Dorsolateral prefrontal cortex (tissue), 120 donors: ENCODE measurements at regions of chr20 and their contacts with region 1.

Region 1: DNA sequence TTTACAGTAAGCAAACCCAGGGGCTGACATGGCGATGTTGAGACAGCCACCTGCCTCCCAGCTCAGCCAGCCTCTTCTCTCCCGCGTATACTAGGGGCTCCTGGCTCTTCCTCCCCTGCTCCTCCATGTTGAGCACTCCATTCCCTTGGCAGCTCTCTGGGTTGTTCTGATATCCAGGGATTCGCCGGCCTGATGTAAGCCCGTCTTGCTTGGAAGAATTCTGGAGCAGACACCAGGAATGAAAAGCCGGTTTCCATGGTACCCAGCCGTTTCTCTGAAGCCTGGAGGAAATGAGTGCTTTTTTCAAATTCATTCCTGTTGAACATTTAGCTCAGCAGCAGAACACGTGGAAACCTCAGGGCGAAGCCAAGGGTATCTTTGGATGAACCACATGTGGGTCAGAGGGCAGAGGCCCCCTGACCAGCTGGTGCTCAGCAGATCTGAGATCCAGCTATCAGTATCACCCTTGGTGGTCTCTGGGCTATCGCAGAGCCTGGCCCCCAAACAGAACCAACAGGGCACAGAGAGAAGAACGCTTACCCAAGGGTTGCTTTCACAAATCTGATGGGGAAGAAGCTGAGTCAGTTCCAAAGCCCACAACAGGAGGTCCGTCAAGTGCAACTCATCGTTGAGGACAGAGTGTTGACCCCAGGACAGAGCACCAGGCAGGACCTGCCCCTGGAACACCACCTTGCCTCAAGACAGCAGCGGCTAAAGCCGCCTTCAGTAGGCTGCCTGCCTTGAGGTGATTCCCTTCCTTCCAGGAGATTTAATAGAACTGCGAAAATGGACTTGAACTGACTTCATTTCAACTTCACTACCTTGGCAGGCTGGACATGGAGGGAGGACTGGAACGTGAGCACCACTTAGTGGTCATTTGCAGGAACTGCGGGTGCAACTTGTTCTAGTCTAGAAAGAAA is 96.1 kb upstream of the RIN2 start:
- DNase-seq: peak; percentile 42 to 82 (median 74)
- H3K4me3 ChIP-seq: peak overlapping the region in 29 of 59 donors; percentile 4 to 49 (median 17)
- H3K27ac ChIP-seq: peak overlapping the region in 18 of 59 donors; percentile 1 to 53 (median 20)
- H3K27me3 ChIP-seq: peaks cover 0 to 7% (median 0%) of the 10 kb centered on the region in 45 donors
- CTCF ChIP-seq: peak; percentile 90 to 99 (median 97)

Region 2: DNA sequence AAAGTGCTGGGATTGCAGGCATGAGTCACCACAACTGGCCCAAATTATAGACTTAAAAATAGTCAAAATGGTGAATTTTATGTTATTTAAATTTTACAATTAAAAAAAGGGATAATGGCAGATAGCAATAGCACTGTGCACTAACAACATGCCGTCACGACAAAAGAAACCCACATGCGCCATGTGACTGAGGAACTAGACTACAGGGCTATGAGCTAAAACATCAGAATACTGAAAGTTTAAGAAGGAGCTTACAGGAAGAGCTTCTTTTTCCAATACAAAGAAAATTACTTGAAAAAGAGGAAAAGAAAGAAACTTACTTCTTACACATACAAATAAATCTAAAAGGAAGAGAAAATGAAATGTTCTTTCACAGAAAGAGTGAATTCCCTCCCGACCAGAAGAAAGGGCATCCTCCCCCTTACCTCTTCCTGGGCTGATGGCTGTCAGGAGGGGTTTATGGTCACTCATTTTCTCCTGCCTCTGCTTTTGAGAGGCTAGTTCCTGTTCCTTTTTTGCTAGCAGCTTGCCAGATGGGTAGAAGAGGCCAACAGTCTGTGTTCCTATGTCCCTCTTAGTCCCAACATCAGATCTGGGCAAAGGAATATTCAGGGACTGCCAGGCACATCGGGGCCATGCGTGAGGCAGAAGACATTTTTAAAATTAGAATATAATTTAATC is 1249.6 kb before region 1 on chr20:
- intact Hi-C with region 1: loop called in 1 of 2 experiments (anchors 10 kb)
- DNase-seq: no peak
- H3K4me3 ChIP-seq: no peak overlapping the region
- H3K27ac ChIP-seq: no peak overlapping the region
- H3K27me3 ChIP-seq: no peaks in the 10 kb centered on the region
- CTCF ChIP-seq: no peak

Region 3: DNA sequence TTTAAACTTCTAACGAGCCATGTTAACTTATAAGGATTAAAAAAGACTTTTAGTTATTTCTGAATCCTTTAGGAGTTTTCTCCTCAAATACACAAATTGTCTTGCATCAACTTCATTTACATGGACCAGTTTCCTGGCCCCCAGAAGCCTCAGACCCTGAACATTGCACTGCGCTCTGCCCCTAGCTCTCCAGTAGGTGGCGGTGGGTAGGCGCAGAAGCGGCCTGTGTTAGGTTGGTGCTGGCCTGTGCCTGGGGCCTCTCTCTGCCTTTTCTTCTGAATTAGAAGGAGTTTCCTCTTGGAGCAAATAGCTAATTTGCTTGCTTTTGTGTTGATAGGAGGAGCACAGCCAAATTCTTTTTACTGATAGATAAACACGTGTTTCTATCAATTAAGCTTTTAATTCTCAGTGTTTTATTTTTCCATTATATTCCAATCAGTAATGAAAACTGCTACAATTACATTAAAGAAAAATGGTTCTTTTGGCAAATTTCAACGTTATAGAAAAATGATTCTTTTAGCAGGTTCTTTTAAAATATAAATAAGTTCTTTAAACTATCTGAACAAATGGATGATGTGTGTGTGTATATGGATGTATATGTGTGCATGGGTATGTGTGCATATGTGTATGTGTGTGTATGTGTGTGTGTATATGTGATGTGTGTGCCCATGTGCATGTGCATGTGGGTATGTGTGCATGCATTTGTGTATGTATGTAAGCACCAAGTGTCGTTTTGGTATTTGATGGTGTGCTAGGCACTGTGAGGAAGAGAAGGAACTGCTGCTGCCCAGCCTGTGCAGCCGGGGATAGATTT is 1029.6 kb before region 1 on chr20:
- intact Hi-C with region 1: loop called (anchors 5 kb)
- DNase-seq: peak; percentile 52 to 85 (median 78)
- H3K4me3 ChIP-seq: no peak overlapping the region
- H3K27ac ChIP-seq: peak overlapping the region in 51 of 59 donors; percentile 3 to 88 (median 61)
- H3K27me3 ChIP-seq: no peaks in the 10 kb centered on the region
- CTCF ChIP-seq: peak; percentile 66 to 99 (median 92)

Region 4: GRCh38 chr20:19205977-19206396 is 456.0 kb before region 1 on chr20:
- intact Hi-C with region 1: loop called (anchors 2 to 5 kb)
- DNase-seq: peak in 8 of 10 donors; percentile 35 to 76 (median 61)
- H3K4me3 ChIP-seq: no peak overlapping the region
- H3K27ac ChIP-seq: no peak overlapping the region
- H3K27me3 ChIP-seq: peaks cover 0 to 16% (median 0%) of the 10 kb centered on the region in 45 donors
- CTCF ChIP-seq: peak; percentile 61 to 93 (median 80)

Region 5: GRCh38 chr20:19212821-19213502 is 449.0 kb before region 1 on chr20:
- intact Hi-C with region 1: loop called in 1 of 2 experiments (anchors 5 kb)
- DNase-seq: peak in 8 of 10 donors; percentile 17 to 69 (median 58)
- H3K4me3 ChIP-seq: peak overlapping the region; percentile 14 to 69 (median 54)
- H3K27ac ChIP-seq: peak overlapping the region in 7 of 59 donors; percentile 8 to 55 (median 22)
- H3K27me3 ChIP-seq: peaks cover 0 to 56% (median 22%) of the 10 kb centered on the region in 45 donors
- CTCF ChIP-seq: peak in 37 of 56 donors; percentile 11 to 39 (median 28)

Region 6: GRCh38 chr20:19644085-19644484 is 17.9 kb before region 1 on chr20:
- intact Hi-C with region 1: no loop called
- DNase-seq: no peak
- H3K4me3 ChIP-seq: no peak overlapping the region
- H3K27ac ChIP-seq: no peak overlapping the region
- H3K27me3 ChIP-seq: peaks cover 0 to 3% (median 0%) of the 10 kb centered on the region in 45 donors
- CTCF ChIP-seq: no peak